GM23248 (cell line): ENCODE measurements at regions of chr9 and their contacts with region 1.

Region 1: DNA sequence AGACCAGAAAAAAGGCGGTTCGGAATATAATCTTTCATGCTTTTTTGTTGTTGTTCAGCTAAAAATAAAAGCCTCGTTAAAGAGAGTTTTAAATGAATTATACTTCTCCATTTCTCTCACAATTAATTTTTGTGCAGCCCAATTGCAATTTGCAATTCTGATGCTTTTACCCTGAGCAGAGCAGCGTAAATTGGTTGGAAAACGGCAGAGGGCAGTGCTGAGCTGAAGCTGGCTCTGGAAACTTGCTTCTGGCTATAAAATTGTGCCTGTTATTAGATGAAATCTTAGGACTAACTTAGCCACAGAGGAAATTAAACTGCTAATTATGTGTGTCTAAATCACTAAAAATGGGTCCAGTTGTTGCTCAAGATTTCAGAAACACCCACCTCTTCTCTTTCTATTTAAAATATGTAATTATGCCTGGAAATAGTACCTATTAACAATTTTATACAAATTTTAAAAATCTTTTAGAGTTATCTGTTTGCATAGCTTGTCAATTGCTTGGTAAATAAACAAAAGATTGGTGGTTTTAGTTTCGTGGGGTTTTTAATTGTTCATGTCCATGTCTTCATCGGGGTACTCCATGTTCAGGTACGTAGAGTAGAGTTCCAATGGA is 441.8 kb upstream of the TLE4 start:
- DNase-seq: peak; percentile 69
- H3K4me3 ChIP-seq: no peak overlapping the region
- H3K27ac ChIP-seq: no peak overlapping the region
- H3K4me1 ChIP-seq: peaks cover 12% of the 10 kb centered on the region
- H3K27me3 ChIP-seq: no peaks in the 10 kb centered on the region

Region 2: DNA sequence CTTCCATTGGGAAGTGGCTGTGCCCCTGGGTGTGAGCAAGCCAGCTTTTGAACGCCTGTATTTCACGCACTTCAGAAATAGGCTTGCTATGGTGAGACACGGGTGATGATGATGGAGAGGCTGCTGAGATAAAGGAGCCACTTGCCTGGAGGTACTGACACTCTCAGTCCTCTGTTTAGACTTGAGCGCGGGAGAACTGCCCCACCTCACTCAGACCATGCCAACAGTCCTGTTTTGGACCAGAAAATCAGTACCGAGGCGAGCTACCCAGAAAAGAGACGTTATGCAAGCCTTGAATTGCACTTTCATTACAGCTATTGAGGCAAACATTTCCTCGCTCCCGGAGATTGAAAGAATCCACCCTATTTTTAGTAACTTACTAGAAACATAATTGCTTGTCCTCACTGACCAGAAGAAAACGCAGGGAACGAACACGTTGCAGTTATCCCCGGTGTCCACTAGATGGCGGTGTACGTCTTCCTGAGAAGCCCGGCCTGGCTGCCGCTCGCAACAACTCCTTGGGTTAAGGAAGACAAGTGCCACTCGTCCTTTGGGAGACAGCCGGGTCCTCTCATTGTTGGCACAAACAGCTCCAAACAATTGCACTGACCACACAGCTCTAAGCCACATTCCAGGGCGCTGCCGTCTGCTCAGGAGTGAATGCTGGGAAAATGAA is 690.6 kb before region 1 on chr9:
- in situ Hi-C with region 1: loop called (anchors 25 kb)
- DNase-seq: peak; percentile 84
- H3K4me3 ChIP-seq: peak overlapping the region; percentile 38; the same call in 1 of the 2 replicates
- H3K27ac ChIP-seq: no peak overlapping the region
- H3K4me1 ChIP-seq: no peaks in the 10 kb centered on the region
- H3K27me3 ChIP-seq: peaks cover 20% of the 10 kb centered on the region

Region 3: DNA sequence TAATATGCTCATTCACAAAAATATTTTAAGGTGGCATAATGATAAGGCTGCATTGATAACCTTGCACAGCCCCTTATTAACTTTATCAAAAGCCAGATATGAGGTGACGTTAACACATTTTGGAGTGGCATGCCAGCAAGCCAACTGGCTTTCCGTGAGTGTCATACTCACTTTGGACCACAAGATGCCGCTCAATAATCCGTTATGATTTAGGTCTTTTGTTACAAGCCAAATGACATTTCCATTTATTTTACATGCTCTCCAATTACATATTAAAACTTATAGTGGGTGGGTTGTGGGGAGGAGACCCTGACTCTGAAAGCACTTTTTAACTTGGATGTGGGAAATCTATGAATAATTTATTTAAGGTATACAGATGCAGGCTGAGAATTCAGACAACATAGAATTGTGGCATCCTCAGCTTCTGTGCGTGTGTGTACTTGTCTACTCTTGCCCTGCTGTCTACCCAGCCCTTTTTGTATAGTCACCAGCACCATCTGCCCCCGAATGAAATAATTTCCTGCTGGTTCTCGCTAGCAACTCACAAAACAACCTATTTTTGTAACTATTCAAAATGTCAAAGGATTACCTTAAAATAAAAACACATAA is 527.9 kb before region 1 on chr9:
- in situ Hi-C with region 1: loop called (anchors 10 kb)
- DNase-seq: peak; percentile 71
- H3K4me3 ChIP-seq: no peak overlapping the region
- H3K27ac ChIP-seq: no peak overlapping the region
- H3K4me1 ChIP-seq: 0 out of 2 replicates have a peak, but pooled peaks cover 9% of the 10 kb centered on the region
- H3K27me3 ChIP-seq: no peaks in the 10 kb centered on the region

Region 4: DNA sequence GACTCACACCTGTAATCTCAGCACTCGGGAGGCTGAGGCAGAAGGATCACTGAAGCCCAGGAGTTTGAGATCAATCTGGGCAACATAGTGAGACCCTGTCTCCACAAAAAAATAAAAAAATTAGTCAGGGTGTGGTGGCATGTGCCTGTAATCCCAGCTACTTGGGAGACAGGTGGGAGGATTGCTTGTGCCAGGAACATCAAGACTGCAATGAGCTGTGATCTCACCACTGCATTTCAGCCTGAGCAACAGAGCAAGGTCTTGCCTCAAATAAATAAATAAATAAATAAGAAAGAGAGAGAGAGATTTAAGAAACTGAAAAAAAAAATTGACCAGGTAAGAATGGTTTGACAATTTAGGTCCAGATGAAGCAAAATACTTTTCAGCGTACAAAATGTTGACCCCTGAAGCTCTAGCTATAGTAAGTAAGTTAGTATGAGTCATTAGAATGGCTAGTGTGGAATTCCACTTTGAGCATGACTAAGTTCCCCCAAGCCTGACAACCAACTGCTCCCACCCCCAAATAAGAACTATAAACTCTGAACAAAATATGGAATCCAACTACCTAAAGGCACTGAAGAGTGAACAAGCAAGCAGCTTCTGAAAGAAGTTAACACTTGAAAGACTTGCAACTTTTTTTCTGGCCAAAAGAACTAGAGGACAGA is 224.0 kb after region 1 on chr9:
- in situ Hi-C with region 1: no loop called
- DNase-seq: peak; percentile 52
- H3K4me3 ChIP-seq: no peak overlapping the region
- H3K27ac ChIP-seq: no peak overlapping the region
- H3K4me1 ChIP-seq: peaks cover 9% of the 10 kb centered on the region
- H3K27me3 ChIP-seq: no peaks in the 10 kb centered on the region

Region 5: DNA sequence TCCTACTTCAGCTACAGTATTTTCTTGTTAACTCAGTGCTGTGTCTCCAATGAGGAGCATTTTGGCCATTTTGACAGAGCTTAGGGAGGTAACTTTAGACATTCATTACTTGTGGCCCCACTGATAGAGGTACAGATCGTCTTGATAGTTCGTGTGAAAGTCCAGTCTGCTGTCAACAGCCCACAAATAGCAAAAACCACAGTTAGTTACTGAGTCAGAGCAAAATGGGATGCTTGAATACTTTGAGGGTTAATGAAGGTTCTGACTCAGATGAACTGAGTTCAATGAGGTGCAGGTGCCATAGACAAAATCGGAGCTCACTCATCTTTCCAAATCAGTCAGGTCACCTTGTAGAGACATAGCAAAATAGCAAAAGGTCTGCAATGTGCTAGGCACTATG is 278.6 kb after region 1 on chr9:
- in situ Hi-C with region 1: loop called (anchors 25 kb)
- DNase-seq: peak; percentile 54
- H3K4me3 ChIP-seq: no peak overlapping the region
- H3K27ac ChIP-seq: no peak overlapping the region
- H3K4me1 ChIP-seq: no peaks in the 10 kb centered on the region
- H3K27me3 ChIP-seq: peaks cover 7% of the 10 kb centered on the region; the same call in 1 of the 2 replicates

Region 6: GRCh38 chr9:79565245-79565644 is 435.3 kb after region 1 on chr9:
- in situ Hi-C with region 1: loop called (anchors 10 kb)
- DNase-seq: peak; percentile 16
- H3K4me3 ChIP-seq: no peak overlapping the region
- H3K27ac ChIP-seq: no peak overlapping the region
- H3K4me1 ChIP-seq: no peaks in the 10 kb centered on the region
- H3K27me3 ChIP-seq: 0 out of 2 replicates have a peak, but pooled peaks cover 4% of the 10 kb centered on the region